Common myeloid progenitor, CD34-positive (primary cell): ENCODE measurements at regions of chr16 and their contacts with region 1.

Region 1: DNA sequence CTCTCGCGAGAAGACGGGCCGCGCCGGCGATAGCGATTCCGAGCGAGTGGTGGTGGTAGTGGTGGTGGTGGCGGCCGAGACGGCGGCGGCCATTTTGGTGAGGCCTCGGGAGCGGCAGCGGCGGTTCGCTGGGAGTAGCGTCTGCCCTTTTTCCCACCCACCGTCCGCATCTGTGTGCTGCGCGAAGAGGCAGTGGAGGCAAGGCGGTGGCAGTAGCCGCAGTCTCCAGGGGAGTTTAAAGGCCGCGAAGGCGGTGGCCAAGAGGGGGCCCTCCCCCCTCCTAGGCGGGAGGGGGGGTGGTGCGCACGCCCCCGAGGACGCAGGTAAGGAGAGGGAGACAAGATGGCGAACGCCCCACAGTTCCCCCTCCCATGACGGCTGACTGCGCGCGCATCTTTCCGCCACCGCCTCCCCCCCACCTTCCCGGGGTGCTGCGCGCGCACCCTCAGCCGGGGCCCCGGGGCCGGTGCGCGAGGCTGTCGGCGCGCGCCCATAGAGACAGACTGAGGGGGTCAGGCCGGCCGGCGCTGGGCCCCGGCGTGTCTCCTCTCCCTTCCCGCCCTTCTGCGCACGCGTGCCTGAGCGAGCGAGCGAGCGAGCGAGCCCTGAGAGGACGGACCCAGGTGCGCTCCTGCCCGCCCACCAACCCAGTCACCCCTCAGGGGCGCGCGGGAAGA is 694 bp upstream of the SRCAP start:
- DNase-seq: peak; percentile 97 to 99 (median 99)
- H3K4me3 ChIP-seq: peak overlapping the region; percentile 79 to 91 (median 89)
- H3K27ac ChIP-seq: peak overlapping the region; percentile 99 to 100
- H3K4me1 ChIP-seq: peaks cover 7 to 45% (median 41%) of the 10 kb centered on the region in 4 experiments
- H3K27me3 ChIP-seq: no peaks in the 10 kb centered on the region

Region 2: DNA sequence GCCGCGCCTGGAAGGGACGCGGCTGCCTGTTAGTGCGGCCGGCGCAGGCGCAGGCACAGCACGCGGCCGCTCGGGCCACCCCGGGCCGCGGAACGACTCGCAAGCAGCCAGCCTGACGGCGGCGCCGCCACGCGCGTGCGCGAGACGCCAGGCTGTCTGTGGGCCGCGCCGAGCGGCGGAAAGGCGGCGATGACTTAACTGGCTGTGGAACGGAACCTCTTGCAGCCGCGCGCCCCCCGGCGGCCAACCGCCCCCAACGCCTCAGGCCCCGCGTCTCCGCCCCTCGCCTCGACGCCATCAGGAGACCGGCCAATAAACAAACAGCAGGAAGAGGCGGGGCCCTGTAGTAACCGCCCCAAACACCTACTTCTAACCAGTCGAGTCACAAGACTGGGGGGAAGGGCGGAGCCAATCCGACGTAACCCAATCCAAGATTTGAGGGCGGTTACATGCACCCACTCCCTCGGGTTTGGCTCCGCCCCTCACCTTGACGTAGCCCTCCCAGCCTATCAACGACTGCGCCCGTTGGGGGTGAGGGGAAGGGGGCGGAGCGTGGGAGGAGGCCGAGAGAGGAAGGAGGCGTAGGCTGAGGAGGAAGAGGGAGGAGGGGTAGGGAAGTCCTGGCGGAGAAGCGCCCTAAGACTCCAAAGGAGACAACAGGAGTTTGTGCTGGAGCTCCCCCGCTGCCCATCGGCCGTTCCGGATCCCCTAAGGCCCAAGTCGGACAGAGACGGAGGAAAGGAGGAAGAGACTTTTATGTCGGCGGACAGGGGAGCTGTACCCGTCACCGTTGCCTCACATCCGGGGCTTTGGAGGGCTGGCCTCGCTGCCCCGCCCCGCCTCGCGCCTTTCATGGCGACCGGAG is 40.2 kb before region 1 on chr16 and contains the start of gene FBRS:
- CTCF ChIA-PET with region 1: interaction called, 54 read pairs
- POLR2A ChIA-PET with region 1: interaction called, 43 read pairs
- DNase-seq: peak; percentile 100
- H3K4me3 ChIP-seq: peak within 1 kb of the TSS; percentile 86 to 94 (median 90)
- H3K27ac ChIP-seq: peak within 1 kb of the TSS; percentile 100
- H3K4me1 ChIP-seq: peaks cover 8 to 38% (median 35%) of the 10 kb centered on the region in 4 experiments
- H3K27me3 ChIP-seq: no peaks in the 10 kb centered on the region